Prostate gland (tissue), 2 donors: ENCODE measurements at regions of chr19 and their contacts with region 1.

Region 1: DNA sequence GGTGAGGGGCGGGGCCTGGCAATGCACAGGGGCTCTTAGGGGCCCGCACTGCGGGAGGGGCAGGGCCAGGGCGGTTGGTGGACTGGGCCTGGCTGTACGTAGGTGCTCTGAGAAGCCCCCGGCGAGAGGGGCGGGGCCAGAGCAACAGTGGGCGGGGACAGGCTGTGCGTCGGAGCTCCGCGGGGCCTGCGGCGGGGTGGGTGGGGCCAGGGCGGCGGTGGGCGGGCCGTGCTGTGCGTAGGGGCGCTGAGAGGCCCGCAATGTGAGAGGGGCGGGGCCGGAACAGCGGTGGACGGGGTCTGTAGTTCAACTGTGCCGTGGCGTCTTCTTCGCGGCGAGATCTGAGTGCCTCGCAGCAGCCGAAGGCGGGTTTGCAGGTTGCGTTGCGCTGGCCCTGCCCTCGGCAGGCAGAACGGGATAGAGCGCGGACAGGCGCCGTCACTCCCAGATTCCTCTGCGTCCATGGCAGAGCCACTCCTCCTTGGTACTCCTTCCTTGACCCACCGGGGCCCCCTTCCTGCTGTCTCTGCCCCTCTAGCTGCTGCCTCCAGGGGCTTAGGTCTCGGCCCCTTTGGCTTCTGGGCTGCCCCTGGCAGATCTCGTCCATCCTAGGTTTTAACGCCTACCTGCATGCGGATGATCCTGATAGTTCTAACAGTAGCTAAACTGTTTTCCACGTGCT is 33.2 kb downstream of the CCNE1 start:
- DNase-seq: peak; percentile 88
- H3K4me3 ChIP-seq: peak overlapping the region; percentile 75 to 82
- H3K27ac ChIP-seq: peak overlapping the region; percentile 87 to 89
- H3K4me1 ChIP-seq: peaks cover 6% of the 10 kb centered on the region
- H3K27me3 ChIP-seq: no peaks in the 10 kb centered on the region
- CTCF ChIP-seq: no peak
- POLR2A ChIP-seq: peak; percentile 66

Region 2: GRCh38 chr19:29811125-29812079 is 33.6 kb before region 1 on chr19 and contains the start of gene CCNE1:
- intact Hi-C with region 1: loop called (anchors 2 kb)
- DNase-seq: peak; percentile 88
- H3K4me3 ChIP-seq: peak within 1 kb of the TSS; percentile 49 to 51
- H3K27ac ChIP-seq: peak within 1 kb of the TSS in 1 of 2 donors; percentile 13
- H3K4me1 ChIP-seq: no peaks in the 10 kb centered on the region
- H3K27me3 ChIP-seq: no peaks in the 10 kb centered on the region
- CTCF ChIP-seq: no peak
- POLR2A ChIP-seq: no peak
- total RNA-seq, gene CCNE1: 1.6 to 8.0 TPM

Region 3: DNA sequence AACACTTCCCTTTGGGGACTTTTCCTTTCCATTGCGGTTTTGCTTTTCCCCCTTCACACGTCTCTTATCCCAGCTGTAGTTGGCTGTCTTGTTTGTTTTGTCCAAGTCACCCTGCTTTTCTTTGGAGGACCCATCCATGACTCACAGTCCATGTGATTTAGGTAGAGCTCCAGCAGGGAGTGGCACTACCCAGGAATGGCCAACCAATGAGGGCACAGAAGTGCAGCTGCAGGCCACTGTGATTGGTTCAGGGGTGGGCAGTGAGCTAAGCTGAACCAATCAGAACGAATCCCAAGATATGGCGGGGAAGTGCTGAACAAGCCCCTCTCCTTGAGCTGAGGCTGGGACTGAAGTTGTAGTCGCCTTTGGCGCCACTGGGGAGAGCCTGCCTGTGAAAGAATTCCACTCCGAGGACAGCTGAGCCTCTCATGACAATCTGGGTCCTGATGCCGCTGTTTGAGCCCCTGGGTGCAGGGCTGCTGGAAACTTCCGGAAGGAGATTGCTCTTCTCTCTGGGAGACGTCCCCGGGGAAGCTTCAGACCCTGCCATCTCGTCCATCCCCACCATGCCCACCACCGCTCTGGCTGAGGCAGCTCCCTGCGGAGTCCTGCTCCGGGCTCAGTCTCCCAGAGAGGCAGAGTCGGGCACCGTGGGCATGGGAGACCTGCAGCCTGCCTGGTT is 34.1 kb after region 1 on chr19:
- intact Hi-C with region 1: no loop called
- DNase-seq: no peak
- H3K4me3 ChIP-seq: no peak overlapping the region
- H3K27ac ChIP-seq: no peak overlapping the region
- H3K4me1 ChIP-seq: no peaks in the 10 kb centered on the region
- H3K27me3 ChIP-seq: peaks cover 12% of the 10 kb centered on the region
- CTCF ChIP-seq: no peak
- POLR2A ChIP-seq: no peak

Region 4: DNA sequence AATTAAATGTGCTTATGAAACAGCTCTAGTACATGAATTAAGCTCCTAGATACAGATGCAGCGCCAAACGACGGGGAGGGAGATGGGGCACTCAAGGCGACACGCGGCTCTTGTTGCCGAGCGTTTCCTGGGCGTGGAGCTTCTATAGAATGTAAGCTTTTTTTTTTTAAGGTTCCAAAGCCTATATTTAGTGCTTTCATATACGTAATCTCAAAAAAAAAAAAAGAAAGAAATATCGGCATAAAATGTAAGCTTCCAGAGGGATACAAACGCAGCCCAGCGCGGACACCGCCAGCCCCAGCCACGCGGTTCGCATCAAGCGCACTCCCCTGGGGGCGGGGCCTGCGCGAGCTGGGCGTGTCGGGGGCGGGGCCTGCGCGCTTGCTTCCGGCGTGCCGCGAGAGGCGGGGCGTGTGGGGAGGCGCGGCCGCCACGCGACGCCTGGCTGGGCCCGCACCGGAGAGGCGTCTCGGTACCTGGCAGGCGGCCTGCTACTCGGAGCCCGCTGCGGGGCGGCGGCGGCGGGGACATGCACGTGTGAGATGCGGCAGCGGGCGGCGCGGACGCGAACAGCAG is 96.9 kb after region 1 on chr19 and contains the start of gene URI1:
- intact Hi-C with region 1: loop called (anchors 5 kb)
- DNase-seq: peak; percentile 89
- H3K4me3 ChIP-seq: peak within 1 kb of the TSS; percentile 68 to 73
- H3K27ac ChIP-seq: peak within 1 kb of the TSS; percentile 58 to 72
- H3K4me1 ChIP-seq: peaks cover 12% of the 10 kb centered on the region
- H3K27me3 ChIP-seq: no peaks in the 10 kb centered on the region
- CTCF ChIP-seq: peak in 1 of 4 experiments; percentile 7
- POLR2A ChIP-seq: peak; percentile 64
- total RNA-seq, gene URI1: 48.2 to 71.0 TPM